Spleen (tissue), 13 donors: ENCODE measurements at regions of chr16 and their contacts with region 1.

Region 1: DNA sequence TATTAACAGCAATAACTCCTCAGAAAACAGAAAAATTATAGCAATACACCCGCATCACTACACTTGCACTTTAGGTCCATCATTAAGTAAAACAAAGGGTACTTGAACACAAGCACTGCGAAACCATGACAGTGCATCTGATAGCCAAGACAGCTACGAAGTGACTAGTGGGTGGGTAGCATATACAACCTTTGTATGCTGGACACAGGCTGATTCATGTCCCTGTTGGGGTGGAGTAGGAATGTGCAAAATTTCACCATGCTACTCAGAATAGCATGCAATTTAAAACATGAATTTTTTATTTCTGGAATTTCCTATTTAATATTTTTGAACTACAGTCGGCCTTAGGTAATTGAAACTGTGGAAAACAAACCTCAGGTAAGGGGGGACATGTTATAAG is 2414.1 kb downstream of the TP53TG3F start:
- DNase-seq: no peak
- H3K4me3 ChIP-seq: no peak overlapping the region
- H3K27ac ChIP-seq: no peak overlapping the region
- H3K4me1 ChIP-seq: no peaks in the 10 kb centered on the region
- H3K27me3 ChIP-seq: no peaks in the 10 kb centered on the region
- CTCF ChIP-seq: no peak
- POLR2A ChIP-seq: no peak

Region 2: GRCh38 chr16:35823342-35823741 is 50.1 kb before region 1 on chr16:
- intact Hi-C with region 1: loop called (anchors 10 kb)
- DNase-seq: no peak
- H3K4me3 ChIP-seq: no peak overlapping the region
- H3K27ac ChIP-seq: no peak overlapping the region
- H3K4me1 ChIP-seq: no peaks in the 10 kb centered on the region
- H3K27me3 ChIP-seq: no peaks in the 10 kb centered on the region
- CTCF ChIP-seq: no peak
- POLR2A ChIP-seq: no peak